AG04450 (cell line): ENCODE measurements at regions of chr12 and their contacts with region 1.

Region 1: DNA sequence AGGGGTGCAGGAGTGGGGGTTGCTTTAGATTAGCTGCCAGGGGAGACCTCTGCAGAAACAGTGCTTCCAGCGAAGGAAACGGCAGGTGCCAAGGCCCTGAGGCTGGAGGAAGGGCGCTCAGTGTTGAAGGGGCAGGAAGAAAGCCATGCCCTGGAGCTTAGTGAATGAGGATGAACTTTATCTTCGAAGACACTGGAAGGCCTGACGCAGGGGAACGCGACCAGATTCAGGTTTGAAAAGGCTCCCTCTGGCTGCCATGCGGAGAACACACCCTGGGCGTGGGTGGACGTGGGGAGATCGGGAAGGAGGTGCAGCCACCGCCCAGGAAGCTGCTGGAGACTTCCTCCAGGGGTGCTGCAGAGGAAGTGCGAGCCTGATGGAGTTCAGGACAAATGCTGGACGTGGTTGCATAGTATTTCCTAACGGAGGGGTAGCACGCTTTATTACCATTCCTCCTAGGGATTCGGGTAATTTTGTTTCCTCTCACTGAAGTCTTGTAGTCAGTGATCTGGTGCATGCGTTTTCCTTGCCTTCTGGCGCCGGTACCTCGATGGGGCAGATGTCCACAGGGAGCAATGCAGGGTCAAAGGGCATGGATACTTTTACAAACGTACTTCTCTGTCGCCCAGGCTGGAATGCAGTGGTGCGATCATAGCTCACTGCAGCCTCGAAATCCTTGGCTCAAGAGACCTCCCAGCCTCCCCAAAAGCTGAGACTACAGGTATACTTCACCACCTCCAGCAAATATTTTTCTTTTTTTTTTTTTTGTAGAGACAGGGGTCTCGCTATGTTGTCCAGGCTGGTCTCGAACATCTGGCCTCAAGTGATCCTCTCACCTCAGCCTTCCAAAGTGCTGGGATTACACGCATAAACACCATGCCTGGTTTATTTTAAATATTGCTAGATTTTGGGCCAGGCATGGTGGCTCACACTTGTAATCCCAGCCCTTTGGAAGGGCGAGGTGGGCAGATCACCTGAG is 26.4 kb upstream of the UBC start:
- DNase-seq: peak; percentile 74
- H3K4me3 ChIP-seq: peak overlapping the region; percentile 52
- H3K27ac ChIP-seq: peak overlapping the region; percentile 89
- H3K27me3 ChIP-seq: no peaks in the 10 kb centered on the region
- CTCF ChIP-seq: peak; percentile 91

Region 2: GRCh38 chr12:124837958-124838803 is 102.7 kb before region 1 on chr12:
- CTCF ChIA-PET with region 1: no interaction called
- POLR2A ChIA-PET with region 1: no interaction called
- DNase-seq: peak; percentile 83
- H3K4me3 ChIP-seq: no peak overlapping the region
- H3K27ac ChIP-seq: peak overlapping the region; percentile 57
- H3K27me3 ChIP-seq: no peaks in the 10 kb centered on the region
- CTCF ChIP-seq: no peak

Region 3: DNA sequence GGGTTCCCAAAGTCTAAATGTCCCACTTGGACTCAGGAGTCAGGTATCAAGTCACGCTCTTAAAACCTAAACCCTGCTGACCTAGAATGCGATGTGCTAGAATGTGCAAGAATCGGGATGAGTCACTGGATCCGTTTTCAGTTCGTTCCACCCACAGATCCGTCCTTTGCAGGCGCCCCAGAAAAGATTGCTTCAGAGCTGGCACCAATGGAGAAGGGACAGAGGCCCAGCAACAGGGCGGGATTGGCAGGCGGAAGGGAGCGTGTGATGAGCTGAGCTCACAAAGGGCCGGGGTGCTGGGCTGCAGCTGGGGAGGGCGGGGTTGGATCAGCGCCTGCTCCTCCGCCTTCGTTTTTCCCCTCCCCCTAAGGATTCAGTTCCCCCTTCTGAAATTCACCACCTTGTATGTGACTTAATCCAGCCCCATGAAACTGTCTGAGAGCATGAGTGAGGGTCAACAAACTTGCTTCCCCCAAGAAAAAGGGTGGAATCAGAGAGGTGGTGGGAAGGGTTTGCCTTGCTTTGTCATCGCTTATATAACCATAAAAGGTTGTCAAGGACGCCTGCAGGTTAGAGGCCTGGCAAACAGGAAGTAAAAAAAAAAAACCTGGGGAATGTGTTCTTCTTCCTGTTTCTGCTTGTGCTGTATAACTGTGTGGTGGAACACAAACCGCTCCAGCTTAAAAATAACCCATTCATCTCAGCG is 23.6 kb before region 1 on chr12:
- CTCF ChIA-PET with region 1: interaction called, 39 read pairs
- POLR2A ChIA-PET with region 1: interaction called, 65 read pairs
- DNase-seq: peak; percentile 99
- H3K4me3 ChIP-seq: peak overlapping the region; percentile 100
- H3K27ac ChIP-seq: peak overlapping the region; percentile 99
- H3K27me3 ChIP-seq: no peaks in the 10 kb centered on the region
- CTCF ChIP-seq: no peak

Region 4: GRCh38 chr12:124927201-124928094 is 13.4 kb before region 1 on chr12:
- CTCF ChIA-PET with region 1: interaction called, 17 read pairs
- POLR2A ChIA-PET with region 1: interaction called, 36 read pairs
- DNase-seq: no peak
- H3K4me3 ChIP-seq: peak overlapping the region; percentile 78
- H3K27ac ChIP-seq: peak overlapping the region; percentile 97
- H3K27me3 ChIP-seq: no peaks in the 10 kb centered on the region
- CTCF ChIP-seq: no peak

Region 5: GRCh38 chr12:124953689-124954405 is 13.0 kb after region 1 on chr12:
- CTCF ChIA-PET with region 1: interaction called, 14 read pairs
- POLR2A ChIA-PET with region 1: interaction called, 3 read pairs
- DNase-seq: no peak
- H3K4me3 ChIP-seq: no peak overlapping the region
- H3K27ac ChIP-seq: no peak overlapping the region
- H3K27me3 ChIP-seq: no peaks in the 10 kb centered on the region
- CTCF ChIP-seq: no peak